Activated CD4-positive, alpha-beta T cell treated with anti-CD3 and anti-CD28 coated beads for 36 hours (primary cell): ENCODE measurements at regions of chr19 and their contacts with region 1.

Region 1: DNA sequence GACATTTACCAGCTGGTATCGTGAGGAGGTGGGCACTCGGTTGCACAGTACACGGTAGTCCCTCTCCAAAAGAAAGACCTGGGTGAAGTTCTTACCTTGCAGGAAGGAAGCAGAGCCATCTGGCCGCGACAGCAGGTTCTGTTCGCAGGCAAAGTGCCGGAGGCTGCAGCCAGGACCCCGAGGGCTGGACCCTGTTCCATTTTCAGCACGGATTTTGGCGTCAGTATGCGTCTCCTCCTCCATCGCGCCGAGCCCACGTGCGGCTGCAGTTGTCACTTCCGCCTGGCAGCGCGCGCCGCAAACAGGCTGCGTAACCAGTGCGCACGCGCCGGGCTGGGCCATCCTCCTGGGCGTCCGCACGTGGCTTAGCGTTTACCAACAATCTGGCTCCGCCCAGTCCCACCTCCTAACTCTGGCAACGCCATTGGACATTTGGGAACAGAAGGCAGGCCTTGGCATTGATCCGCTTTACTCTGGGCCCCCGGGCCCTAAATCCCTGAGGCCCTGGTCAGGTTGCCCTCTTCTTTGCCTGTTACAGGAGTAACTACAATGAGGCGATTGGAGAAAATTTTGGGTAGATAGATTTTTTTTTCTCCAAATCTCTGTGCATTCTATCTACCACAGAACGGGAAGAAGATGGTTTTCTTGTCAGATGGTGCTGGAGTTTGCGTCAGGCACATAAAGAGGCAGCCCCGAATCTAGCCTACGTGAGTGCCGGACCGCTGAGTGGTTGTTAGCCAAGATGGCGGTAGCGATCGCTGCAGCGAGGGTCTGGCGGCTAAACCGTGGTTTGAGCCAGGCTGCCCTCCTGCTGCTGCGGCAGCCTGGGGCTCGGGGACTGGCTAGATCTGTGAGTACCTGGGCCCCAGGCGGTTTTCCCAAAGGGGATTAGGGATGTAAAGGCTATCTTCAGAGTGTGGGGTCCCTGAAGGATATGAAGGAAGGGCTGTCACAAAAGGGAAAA is at the starts of genes BCKDHA and EXOSC5:
- DNase-seq: peak; percentile 99
- ATAC-seq: peak; percentile 100
- H3K4me3 Mint-ChIP-seq: peak within 1 kb of the TSS; percentile 97
- H3K27ac Mint-ChIP-seq: peak within 1 kb of the TSS; percentile 97
- H3K4me1 Mint-ChIP-seq: peaks cover 31% of the 10 kb centered on the region
- H3K27me3 Mint-ChIP-seq: no peaks in the 10 kb centered on the region
- total RNA-seq, gene BCKDHA: 14.5 to 25.4 TPM
- total RNA-seq, gene EXOSC5: 32.7 to 47.8 TPM

Region 2: DNA sequence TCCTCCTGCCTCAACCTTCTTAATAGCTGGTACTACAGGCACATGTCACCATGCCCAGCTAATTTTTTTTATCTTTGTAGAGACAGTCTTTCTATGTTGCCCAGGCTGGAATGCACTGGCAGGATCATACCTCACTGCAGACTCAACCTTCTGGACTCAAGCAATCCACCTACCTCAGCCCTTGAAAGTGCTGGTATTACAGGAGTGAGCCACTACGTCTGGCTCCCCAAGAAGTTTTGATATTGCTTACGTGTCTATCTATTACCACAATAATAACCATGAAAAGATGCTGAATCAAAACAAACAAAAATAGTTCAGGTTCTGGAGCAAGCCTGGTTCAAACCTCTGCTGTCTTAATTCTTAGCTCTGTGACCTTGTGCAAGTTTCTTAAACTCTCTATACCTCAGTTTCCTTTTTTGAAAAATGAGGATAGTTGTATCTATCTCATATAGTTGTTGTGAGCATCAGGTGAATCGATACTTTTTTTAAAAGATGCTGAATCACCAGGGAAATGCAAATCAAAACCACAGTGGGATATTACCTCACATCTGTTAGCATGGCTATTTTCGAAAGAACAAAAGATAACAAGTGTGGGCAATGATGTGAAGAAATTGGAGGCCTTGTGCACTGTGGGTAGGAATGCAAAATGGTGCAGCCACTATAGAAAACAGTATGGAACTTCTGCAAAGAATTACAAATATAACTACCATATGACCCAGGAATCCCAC is 1637.7 kb before region 1 on chr19:
- CTCF ChIA-PET with region 1: no interaction called
- POLR2A ChIA-PET with region 1: no interaction called
- intact Hi-C with region 1: no loop called
- DNase-seq: no peak
- ATAC-seq: no peak
- H3K4me3 Mint-ChIP-seq: no peak overlapping the region
- H3K27ac Mint-ChIP-seq: no peak overlapping the region
- H3K4me1 Mint-ChIP-seq: peaks cover 4% of the 10 kb centered on the region
- H3K27me3 Mint-ChIP-seq: peaks cover 36% of the 10 kb centered on the region

Region 3: DNA sequence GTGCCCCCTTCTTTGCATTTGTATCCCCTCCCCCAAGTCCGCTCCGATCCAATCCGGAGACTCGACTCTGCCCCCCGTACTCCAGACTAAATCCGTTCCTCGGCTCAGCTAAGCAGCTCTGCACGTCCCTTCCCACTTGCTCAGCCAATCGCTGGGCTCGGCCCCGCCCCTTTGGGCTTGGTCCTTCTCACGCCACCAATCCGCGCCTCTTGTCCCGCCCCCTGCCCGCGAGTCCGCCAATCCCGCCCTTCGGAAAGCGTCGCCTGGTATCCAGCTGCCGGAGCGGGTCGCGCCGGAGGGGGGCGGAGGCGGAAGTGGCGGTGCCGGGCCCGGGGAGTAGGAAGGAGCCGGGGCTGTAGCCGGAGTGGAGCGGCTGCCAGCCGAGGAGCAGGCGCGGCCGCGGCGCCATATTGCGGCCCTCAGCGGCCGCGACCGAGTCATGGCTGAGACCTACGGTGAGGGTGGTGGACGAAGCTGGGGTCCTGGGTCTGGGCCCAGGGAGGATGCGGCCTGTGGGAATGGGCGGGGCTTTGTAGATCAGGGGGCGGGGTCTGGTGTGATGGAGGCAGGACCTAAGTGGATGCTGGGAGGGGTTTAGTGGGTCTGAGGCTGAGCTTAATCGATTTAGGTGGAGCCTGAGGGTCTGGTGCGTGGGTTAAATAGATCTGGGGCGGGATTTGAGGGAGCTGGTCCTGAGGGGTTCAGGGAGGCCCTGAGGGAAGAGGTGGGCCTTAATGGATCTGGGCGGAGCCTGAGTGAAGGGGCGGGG is 619.2 kb before region 1 on chr19 and contains the start of gene RAB4B:
- CTCF ChIA-PET with region 1: no interaction called
- POLR2A ChIA-PET with region 1: no interaction called
- intact Hi-C with region 1: loop called in 1 of 2 experiments (anchors 1 kb)
- DNase-seq: peak; percentile 100
- ATAC-seq: peak; percentile 79
- H3K4me3 Mint-ChIP-seq: peak within 1 kb of the TSS; percentile 84
- H3K27ac Mint-ChIP-seq: peak within 1 kb of the TSS; percentile 94
- H3K4me1 Mint-ChIP-seq: peaks cover 38% of the 10 kb centered on the region
- H3K27me3 Mint-ChIP-seq: no peaks in the 10 kb centered on the region
- total RNA-seq, gene RAB4B: 26.4 to 33.7 TPM

Region 4: GRCh38 chr19:41327576-41328156 is 69.7 kb before region 1 on chr19:
- CTCF ChIA-PET with region 1: no interaction called
- POLR2A ChIA-PET with region 1: no interaction called
- intact Hi-C with region 1: loop called in 1 of 2 experiments (anchors 1 kb)
- DNase-seq: peak; percentile 93
- ATAC-seq: peak; percentile 75
- H3K4me3 Mint-ChIP-seq: peak overlapping the region; percentile 63
- H3K27ac Mint-ChIP-seq: peak overlapping the region; percentile 96
- H3K4me1 Mint-ChIP-seq: peaks cover 55% of the 10 kb centered on the region
- H3K27me3 Mint-ChIP-seq: no peaks in the 10 kb centered on the region

Region 5: DNA sequence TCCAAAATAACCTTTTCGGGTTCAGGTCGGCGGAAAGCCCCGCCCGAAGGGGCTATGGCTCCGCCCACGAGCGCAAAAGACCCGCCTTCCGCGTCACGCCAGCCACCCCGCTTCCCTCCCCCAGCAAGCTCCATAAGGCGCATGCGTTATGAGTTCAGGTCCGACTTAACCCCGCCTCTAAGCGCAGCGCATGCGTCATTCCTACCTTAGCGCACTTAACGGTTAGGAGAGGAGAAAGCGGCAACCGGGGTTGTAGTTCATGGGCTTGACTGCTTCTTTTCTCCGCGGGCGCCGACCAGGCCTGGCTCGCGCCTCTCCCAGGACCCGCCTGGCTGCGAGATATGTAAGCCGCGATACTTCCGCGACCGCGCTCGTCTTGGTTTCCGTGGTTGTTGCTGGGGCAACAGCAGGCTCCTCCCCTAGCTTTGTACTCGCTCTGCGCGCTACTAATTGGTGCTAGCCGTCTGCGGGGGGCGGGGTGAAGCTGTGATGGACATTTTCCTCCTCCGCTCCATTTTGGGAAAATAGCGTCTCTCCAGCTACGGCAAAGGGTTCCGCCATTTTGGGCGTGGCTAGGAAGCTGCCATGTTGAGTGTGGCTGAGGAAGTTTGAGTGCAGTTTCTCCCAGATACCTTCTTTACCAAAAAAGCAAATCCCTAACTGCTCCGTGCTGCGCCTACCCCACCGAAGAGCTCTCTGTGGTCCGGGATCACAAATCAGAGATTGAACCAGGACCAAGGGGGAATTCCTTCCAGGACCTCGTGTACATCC is 33.4 kb before region 1 on chr19 and contains the start of gene B9D2:
- CTCF ChIA-PET with region 1: interaction called, 4 read pairs
- POLR2A ChIA-PET with region 1: interaction called, 10 read pairs
- intact Hi-C with region 1: loop called (anchors 1 kb)
- DNase-seq: peak; percentile 99
- ATAC-seq: peak; percentile 95
- H3K4me3 Mint-ChIP-seq: peak within 1 kb of the TSS; percentile 92
- H3K27ac Mint-ChIP-seq: peak within 1 kb of the TSS; percentile 98
- H3K4me1 Mint-ChIP-seq: peaks cover 29% of the 10 kb centered on the region
- H3K27me3 Mint-ChIP-seq: no peaks in the 10 kb centered on the region
- total RNA-seq, gene B9D2: 4.0 to 5.2 TPM

Region 6: GRCh38 chr19:41420101-41420880 is 22.9 kb after region 1 on chr19:
- CTCF ChIA-PET with region 1: no interaction called
- POLR2A ChIA-PET with region 1: no interaction called
- intact Hi-C with region 1: no loop called
- DNase-seq: no peak
- ATAC-seq: no peak
- H3K4me3 Mint-ChIP-seq: no peak overlapping the region
- H3K27ac Mint-ChIP-seq: no peak overlapping the region
- H3K4me1 Mint-ChIP-seq: no peaks in the 10 kb centered on the region
- H3K27me3 Mint-ChIP-seq: no peaks in the 10 kb centered on the region

Region 7: DNA sequence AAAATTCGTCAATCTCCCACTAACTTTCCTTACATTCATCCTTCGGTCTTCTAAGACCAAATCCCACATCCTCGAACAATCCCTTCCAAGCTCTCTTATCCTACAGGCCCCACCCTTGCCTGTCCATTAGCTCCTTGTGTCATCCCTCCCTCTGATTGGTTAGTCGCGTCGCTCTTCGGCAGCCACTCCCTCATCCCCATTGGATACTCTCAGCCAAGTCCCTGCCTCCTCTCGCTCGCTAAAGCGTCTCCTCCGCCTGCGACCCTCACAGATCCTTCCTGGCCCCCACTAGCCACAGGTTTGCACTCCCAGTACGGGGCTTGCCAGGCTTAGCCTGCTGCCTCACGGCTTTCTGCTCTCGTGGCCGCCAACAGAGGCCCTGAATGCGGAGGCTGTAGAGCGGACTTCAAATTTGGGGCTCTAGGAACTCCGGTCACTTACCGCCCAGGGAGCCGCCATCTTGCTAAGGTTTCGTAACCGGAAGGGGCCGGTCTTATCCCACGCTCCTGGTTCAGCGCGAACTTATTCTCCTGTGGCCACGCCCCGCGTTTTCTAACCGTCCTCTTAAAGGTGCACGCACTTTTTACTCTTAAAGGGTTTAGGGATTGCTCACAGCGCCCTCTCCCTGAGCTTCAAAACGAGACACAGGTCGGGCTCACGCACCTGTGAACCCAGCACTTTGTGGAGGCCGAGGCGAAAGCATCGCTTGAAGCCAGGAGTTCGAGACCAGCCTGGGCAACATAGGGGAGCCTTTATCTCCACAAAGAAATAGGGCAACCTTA is 42.3 kb after region 1 on chr19 and contains the start of gene DMAC2:
- CTCF ChIA-PET with region 1: interaction called, 4 read pairs
- POLR2A ChIA-PET with region 1: interaction called, 5 read pairs
- intact Hi-C with region 1: loop called (anchors 1 kb)
- DNase-seq: peak; percentile 98
- ATAC-seq: peak; percentile 97
- H3K4me3 Mint-ChIP-seq: no peak within 1 kb of the TSS
- H3K27ac Mint-ChIP-seq: peak within 1 kb of the TSS; percentile 2
- H3K4me1 Mint-ChIP-seq: peaks cover 18% of the 10 kb centered on the region
- H3K27me3 Mint-ChIP-seq: peaks cover 2% of the 10 kb centered on the region
- total RNA-seq, gene DMAC2: 52.5 to 66.3 TPM

Region 8: GRCh38 chr19:41531438-41532311 is 134.3 kb after region 1 on chr19:
- CTCF ChIA-PET with region 1: no interaction called
- POLR2A ChIA-PET with region 1: no interaction called
- intact Hi-C with region 1: loop called in 1 of 2 experiments (anchors 5 kb)
- DNase-seq: peak; percentile 91
- ATAC-seq: peak; percentile 85
- H3K4me3 Mint-ChIP-seq: peak overlapping the region; percentile 76
- H3K27ac Mint-ChIP-seq: peak overlapping the region; percentile 65
- H3K4me1 Mint-ChIP-seq: peaks cover 60% of the 10 kb centered on the region
- H3K27me3 Mint-ChIP-seq: no peaks in the 10 kb centered on the region

Region 9: GRCh38 chr19:41785653-41786052 is 388.3 kb after region 1 on chr19:
- CTCF ChIA-PET with region 1: no interaction called
- POLR2A ChIA-PET with region 1: no interaction called
- intact Hi-C with region 1: no loop called
- DNase-seq: peak; percentile 85
- ATAC-seq: peak; percentile 95
- H3K4me3 Mint-ChIP-seq: no peak overlapping the region
- H3K27ac Mint-ChIP-seq: no peak overlapping the region
- H3K4me1 Mint-ChIP-seq: peaks cover 17% of the 10 kb centered on the region
- H3K27me3 Mint-ChIP-seq: peaks cover 51% of the 10 kb centered on the region

Region 10: DNA sequence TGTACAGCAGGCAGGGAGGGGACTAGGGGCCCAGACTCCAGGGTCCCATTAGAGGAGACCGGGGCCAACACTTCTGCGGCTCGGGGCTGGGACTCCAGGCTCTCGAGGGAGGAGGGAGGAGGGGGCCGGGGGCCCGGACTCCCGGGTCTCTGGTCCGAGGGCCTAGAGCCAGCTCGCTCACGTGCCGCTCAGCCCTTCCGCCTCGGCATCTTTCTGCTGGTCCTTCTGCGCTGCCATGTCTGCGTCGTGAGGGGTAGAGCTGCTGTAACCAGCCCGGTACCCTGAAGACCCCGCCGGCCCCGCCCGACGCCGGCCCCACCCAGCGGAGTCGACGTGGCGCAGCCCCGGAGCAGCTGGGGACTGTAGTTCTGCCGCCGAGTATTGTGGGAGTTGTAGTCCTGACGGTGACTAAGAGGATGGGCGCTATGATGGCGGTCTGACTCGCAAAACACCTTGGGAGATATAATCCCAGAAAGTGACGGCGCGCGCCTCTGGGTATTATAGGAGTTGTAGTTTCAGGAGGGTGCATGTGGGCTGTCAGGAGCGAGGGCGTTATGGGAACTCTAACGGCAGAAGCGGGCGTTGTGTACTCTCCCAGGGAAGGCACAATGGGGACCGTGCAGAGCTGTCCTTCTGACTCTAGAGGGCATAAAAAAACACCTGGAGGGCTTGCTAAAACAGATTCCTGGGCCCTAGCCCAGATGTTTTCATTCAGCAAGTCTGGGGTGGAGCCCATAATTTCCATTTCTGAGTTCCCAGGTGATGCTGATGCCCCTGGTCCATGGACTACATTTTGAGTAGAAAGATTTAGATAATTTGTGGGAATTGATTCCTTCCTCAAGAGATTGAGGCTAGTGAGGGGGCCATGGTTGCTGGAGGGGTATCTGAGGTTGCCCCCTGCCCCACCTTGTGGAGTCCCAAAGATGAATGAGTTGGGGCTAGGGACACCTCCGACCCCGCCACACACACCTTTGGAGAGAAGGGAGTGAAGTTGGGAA is 562.0 kb after region 1 on chr19 and contains the start of gene RABAC1:
- CTCF ChIA-PET with region 1: no interaction called
- POLR2A ChIA-PET with region 1: no interaction called
- intact Hi-C with region 1: loop called in 1 of 2 experiments (anchors 1 kb)
- DNase-seq: peak; percentile 94
- ATAC-seq: peak; percentile 88
- H3K4me3 Mint-ChIP-seq: peak within 1 kb of the TSS; percentile 81
- H3K27ac Mint-ChIP-seq: peak within 1 kb of the TSS; percentile 87
- H3K4me1 Mint-ChIP-seq: peaks cover 16% of the 10 kb centered on the region
- H3K27me3 Mint-ChIP-seq: no peaks in the 10 kb centered on the region
- total RNA-seq, gene RABAC1: 35.3 to 49.7 TPM